ENCODE measurements at regions of chr14 and their contacts with region 1.

Region 1: DNA sequence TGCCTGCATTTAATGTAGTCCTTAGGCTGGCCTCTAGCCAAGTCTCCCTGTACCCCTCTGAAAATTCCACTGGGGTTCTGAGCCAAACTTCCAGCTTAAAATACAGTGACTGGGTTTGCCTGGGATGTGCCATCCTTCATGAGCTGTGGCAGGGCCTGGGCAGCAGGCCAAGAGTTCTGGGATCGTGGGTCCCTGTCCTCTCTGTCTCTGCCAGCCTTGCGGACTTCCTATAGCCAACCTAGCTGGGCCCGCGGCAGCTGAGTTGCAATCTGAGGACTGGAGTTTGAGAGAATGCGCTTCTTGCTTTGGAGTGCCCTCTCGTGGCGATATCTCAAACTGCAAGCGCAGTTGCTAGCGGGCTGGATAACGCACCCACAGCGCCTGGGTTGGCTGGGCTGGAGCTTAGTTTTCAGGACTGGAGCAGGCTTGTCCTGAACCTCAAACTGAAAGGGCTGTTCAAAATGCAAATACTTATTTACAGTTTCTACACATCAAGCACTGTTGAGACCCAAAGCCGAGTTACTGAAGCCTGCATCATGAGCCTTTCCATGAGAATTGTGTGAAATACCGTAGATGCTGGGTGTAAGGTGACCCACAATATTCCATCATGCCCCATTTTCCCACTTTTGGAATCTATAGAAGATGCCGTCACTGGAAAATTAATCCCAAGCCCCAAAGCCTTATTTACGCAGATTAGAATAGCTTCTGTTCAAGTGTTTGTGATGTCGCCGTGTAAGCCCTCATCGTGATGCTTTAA is 7.3 kb upstream of the IFI27L2 start:
- DNase-seq: no peak
- ATAC-seq: peak; percentile 96
- H3K4me3 ChIP-seq: no peak overlapping the region
- H3K27ac ChIP-seq: no peak overlapping the region
- H3K4me1 ChIP-seq: no peaks in the 10 kb centered on the region
- H3K27me3 ChIP-seq: no peaks in the 10 kb centered on the region; a peak in 1 of 4 replicates
- CTCF ChIP-seq: peak; percentile 96 to 99 (median 98)
- EP300 ChIP-seq: no peak
- POLR2A ChIP-seq: no peak
- RAD21 ChIP-seq: peak; percentile 96

Region 2: DNA sequence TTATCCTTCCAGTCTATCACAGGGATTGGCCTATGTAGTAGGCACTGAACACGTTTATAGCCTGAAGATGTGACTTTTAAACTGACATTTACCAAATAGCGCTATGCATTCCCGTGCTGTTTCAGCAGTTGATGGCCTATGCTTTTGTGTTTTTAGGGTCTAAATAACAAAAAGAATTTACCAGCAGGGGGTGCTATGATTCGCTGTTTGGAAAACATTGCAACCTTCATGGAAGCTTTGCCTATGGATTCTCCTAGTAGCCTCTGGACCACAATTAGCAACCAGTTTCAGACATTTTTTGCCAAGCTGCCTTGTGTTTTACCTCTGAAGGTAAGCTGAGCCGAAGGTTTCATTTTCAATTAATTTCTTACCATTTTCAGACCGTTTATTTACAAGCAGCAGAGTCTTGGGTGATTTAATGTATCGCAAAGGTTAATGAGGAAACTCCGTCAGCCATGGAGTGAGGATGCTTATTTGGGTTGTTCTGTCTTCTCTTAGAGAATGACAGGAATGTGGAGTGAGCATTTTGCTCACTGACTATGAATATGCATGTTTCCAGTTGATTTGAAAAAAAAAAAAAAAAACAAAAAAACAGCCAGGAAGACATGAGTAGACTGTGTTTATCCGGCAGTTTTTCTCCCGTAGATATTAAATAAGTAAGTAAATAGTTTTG is 481.5 kb before region 1 on chr14:
- CTCF ChIA-PET with region 1: interaction called, 4 read pairs
- POLR2A ChIA-PET with region 1: no interaction called
- RAD21 ChIA-PET with region 1: interaction called, 6 read pairs
- SMC1A ChIA-PET with region 1: interaction called, 7 read pairs
- in situ Hi-C with region 1: no loop called
- intact Hi-C with region 1: loop called (anchors 5 kb)
- DNase-seq: peak; percentile 3
- ATAC-seq: peak; percentile 50; the same call in 2 of the 3 replicates
- H3K4me3 ChIP-seq: no peak overlapping the region
- H3K27ac ChIP-seq: no peak overlapping the region
- H3K4me1 ChIP-seq: no peaks in the 10 kb centered on the region
- H3K27me3 ChIP-seq: no peaks in the 10 kb centered on the region
- CTCF ChIP-seq: peak; percentile 30 to 58 (median 58); a peak in 5 of 6 replicates
- EP300 ChIP-seq: no peak
- POLR2A ChIP-seq: no peak
- RAD21 ChIP-seq: peak; percentile 61

Region 3: GRCh38 chr14:93970549-93970946 is 166.2 kb before region 1 on chr14:
- CTCF ChIA-PET with region 1: interaction called, 10 read pairs
- POLR2A ChIA-PET with region 1: no interaction called
- RAD21 ChIA-PET with region 1: interaction called, 3 read pairs
- SMC1A ChIA-PET with region 1: interaction called, 3 read pairs
- in situ Hi-C with region 1: no loop called
- intact Hi-C with region 1: no loop called
- DNase-seq: no peak
- ATAC-seq: peak; percentile 66
- H3K4me3 ChIP-seq: peak overlapping the region; percentile 37; the same call in 1 of the 2 replicates
- H3K27ac ChIP-seq: peak overlapping the region; percentile 85
- H3K4me1 ChIP-seq: peaks cover 92% of the 10 kb centered on the region
- H3K27me3 ChIP-seq: no peaks in the 10 kb centered on the region
- CTCF ChIP-seq: peak; percentile 38 to 53 (median 47); a peak in 5 of 6 replicates
- EP300 ChIP-seq: no peak
- POLR2A ChIP-seq: no peak
- RAD21 ChIP-seq: peak; percentile 65

Region 4: DNA sequence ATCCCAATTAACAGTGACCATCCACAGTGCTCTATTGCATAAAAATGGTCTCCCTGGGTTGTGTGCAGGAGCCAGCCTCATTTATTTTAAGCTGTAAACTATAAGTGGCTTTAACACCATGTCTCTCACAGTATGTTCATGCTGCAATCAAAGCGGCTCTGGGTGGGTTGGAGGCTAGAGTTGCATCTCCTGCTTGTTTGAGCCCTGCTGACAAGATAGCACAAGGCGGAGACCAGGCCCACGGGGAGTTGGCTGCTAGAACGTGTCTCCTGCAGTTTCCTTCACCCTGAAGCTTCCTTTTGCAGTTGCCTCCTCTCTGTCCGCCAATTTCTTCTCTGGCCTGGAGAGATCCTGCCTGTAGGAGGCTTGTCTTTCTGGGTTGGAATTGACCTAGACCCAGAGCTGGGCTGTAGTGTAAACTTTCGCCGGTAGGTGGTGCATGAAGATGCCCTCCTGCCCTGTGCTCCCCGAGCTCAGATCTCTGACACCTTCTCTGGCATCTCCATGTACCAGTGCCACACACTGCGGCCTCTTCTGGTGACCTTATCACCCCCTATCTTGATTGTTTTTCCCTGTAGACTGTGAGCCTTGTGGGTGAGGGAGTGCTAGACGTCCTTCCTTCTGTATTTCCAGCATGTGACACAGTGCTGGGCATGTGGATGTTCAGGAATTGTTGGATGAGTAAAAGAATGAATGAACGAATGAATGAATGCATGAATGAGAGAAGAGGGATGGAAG is 100.3 kb before region 1 on chr14:
- CTCF ChIA-PET with region 1: interaction called, 221 read pairs
- POLR2A ChIA-PET with region 1: no interaction called
- RAD21 ChIA-PET with region 1: interaction called, 82 read pairs
- SMC1A ChIA-PET with region 1: interaction called, 73 read pairs
- in situ Hi-C with region 1: loop called (anchors 5 kb)
- intact Hi-C with region 1: loop called (anchors 1 kb)
- DNase-seq: no peak
- ATAC-seq: peak; percentile 99
- H3K4me3 ChIP-seq: no peak overlapping the region
- H3K27ac ChIP-seq: no peak overlapping the region
- H3K4me1 ChIP-seq: no peaks in the 10 kb centered on the region
- H3K27me3 ChIP-seq: 0 out of 4 replicates have a peak, but pooled peaks cover 0 to 5% of the 10 kb centered on the region in 2 experiments
- CTCF ChIP-seq: peak; percentile 87 to 89 (median 88)
- EP300 ChIP-seq: no peak
- POLR2A ChIP-seq: no peak
- RAD21 ChIP-seq: peak; percentile 66

Region 5: GRCh38 chr14:94056579-94057308 is 80.0 kb before region 1 on chr14:
- CTCF ChIA-PET with region 1: interaction called, 35 read pairs
- POLR2A ChIA-PET with region 1: no interaction called
- RAD21 ChIA-PET with region 1: interaction called, 7 read pairs
- SMC1A ChIA-PET with region 1: interaction called, 5 read pairs
- in situ Hi-C with region 1: no loop called
- intact Hi-C with region 1: no loop called
- DNase-seq: peak; percentile 37
- ATAC-seq: peak; percentile 81
- H3K4me3 ChIP-seq: no peak overlapping the region
- H3K27ac ChIP-seq: peak overlapping the region; percentile 43; the same call in 1 of the 2 replicates
- H3K4me1 ChIP-seq: peaks cover 26% of the 10 kb centered on the region
- H3K27me3 ChIP-seq: no peaks in the 10 kb centered on the region
- CTCF ChIP-seq: no peak
- EP300 ChIP-seq: 0 out of 4 replicates have a peak, but pooled peaks of 1 of the 2 experiments have one; percentile 22
- POLR2A ChIP-seq: no peak
- RAD21 ChIP-seq: no peak

Region 6: DNA sequence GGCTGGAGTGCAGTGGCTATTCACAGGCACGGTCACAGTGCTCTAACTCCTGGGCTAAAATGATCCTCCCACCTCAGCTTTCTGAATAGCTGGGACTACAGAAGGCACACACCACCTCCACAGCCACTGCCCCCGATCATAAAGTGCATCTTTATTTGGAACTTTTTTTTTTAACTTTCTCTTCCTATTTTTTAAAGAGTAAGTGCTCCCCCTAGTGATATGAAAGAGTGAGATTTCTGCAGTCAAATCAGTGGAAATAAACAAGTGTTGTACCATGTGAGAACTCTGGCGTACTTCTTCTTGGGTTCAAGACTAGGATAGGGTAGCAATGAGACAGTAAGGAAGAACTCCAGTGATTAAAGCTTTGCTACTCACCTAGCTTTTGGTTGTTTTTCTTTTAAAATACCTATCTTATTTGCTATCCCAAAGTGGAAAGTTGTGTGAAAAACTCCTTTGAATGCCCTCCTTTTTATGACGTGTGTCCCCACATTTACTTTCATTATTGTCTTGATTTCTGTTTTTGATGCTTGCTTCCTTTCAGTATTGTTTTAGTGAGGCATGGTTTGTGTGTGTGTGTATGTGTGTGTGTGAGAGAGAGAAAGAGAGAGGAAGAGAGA is 44.0 kb after region 1 on chr14:
- CTCF ChIA-PET with region 1: interaction called, 58 read pairs
- POLR2A ChIA-PET with region 1: no interaction called
- RAD21 ChIA-PET with region 1: interaction called, 7 read pairs
- SMC1A ChIA-PET with region 1: interaction called, 7 read pairs
- in situ Hi-C with region 1: no loop called
- intact Hi-C with region 1: loop called (anchors 1 kb)
- DNase-seq: peak; percentile 20
- ATAC-seq: peak; percentile 92
- H3K4me3 ChIP-seq: peak overlapping the region; percentile 31; the same call in 1 of the 2 replicates
- H3K27ac ChIP-seq: no peak overlapping the region
- H3K4me1 ChIP-seq: no peaks in the 10 kb centered on the region
- H3K27me3 ChIP-seq: peaks cover 0 to 11% of the 10 kb centered on the region in 2 experiments; a peak in 2 of 4 replicates
- CTCF ChIP-seq: peak; percentile 44 to 60 (median 53); a peak in 5 of 6 replicates
- EP300 ChIP-seq: no peak
- POLR2A ChIP-seq: no peak
- RAD21 ChIP-seq: peak; percentile 64

Measured in GM12878 (cell line).